ENCODE measurements at regions of chr5 and their contacts with region 1.

Region 1: GRCh38 chr5:174348311-174348981 is 302.9 kb downstream of the NSG2 start:
- DNase-seq: no peak
- ATAC-seq: peak; percentile 49

Region 2: GRCh38 chr5:172816901-172817564 is 1531.4 kb before region 1 on chr5:
- intact Hi-C with region 1: loop called (anchors 10 kb)
- DNase-seq: no peak
- ATAC-seq: no peak

Measured in sciatic nerve (tissue), 2 donors.